ENCODE measurements at regions of chr12 and their contacts with region 1.

Region 1: DNA sequence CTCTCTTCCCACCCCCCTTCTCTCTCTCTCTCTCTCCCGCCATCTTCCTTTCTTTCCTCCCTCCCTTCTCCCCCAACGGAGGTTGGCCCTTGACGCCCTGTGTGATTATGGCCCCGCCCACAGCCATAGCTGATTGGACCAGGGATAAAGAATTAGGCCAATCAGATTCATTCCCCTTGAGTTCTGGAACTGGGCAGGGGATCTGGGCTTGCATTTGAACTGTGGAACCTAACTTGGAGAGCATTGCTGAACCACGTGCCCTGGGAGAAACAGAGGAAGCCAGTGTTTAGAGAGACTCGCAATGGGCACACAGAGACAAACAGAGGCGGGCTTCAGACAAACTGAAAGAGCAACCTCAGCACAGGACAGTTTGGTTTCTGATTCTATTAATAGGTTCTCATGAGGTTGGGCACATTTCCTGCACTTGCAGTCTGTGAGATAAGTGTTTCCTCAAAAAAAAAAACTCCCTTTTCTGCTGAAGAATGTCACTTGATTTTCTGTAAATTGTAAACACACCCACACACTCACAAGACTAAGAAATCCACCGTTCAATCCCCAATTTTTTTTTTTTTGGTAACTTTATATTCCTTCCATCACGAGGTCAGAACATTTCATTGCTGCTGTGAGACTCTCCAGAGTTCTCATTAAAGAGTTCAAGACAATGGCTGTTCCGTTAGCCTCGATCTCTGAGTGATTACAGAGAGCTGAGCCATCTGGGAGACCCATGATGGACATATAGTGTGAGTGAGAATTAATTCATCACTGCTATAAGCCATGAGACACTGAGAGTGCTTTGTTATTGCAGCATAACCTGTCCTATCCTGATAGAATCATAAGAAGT is 3.5 kb upstream of the P2RX7 start:
- DNase-seq: peak; percentile 73 to 97 (median 90)

Region 2: GRCh38 chr12:121172145-121172544 is 43.0 kb after region 1 on chr12:
- intact Hi-C with region 1: loop called (anchors 1 kb)
- DNase-seq: no peak

Region 3: DNA sequence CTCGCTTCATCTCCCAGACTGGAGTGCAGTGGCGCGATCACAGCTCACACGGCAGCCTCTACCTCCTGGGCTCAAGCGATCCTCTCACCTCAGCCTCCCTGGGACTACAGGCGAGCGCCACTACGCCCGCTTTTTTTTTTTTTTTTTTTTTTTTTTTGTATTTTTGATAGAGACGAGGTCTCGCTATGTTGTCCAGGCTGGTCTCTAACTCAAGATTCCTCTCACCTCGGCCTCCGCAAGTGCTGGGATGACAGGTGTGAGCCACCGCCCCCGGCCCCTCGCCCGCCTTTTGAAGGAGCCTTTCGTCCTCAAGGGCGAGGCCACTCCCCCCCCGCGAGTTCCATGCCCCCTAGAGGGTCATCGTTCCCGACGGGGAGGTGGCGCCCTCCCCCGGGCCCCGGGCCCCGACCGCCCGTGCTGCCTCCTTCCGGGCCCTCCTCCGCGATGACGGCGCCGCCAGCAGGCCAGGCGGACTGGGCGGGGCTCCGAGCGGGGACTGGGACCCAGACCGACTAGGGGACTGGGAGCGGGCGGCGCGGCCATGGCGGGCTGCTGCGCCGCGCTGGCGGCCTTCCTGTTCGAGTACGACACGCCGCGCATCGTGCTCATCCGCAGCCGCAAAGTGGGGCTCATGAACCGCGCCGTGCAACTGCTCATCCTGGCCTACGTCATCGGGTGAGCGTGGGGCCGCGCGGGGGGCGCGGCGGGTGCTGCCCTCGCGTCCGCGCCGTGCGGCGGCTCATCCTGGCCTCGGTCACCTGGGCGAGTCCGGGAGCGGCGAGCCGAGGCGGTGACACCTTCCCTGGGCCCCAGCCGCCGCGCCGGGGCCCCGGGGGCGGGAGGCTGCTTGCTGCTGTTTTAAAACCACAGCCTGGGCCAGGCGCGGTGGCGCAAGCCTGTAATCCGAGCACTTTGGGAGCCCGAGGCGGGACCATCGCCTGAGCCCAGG is 80.7 kb after region 1 on chr12 and contains the start of gene P2RX4:
- intact Hi-C with region 1: loop called (anchors 5 kb)
- DNase-seq: peak; percentile 71 to 98 (median 84)

Measured in posterior cingulate gyrus (tissue), 11 donors.